ENCODE measurements at regions of chr12 and their contacts with region 1.

Region 1: GRCh38 chr12:6873094-6874014 is at the start of gene SPSB2:
- DNase-seq: peak; percentile 100
- ATAC-seq: peak; percentile 78
- H3K4me3 Mint-ChIP-seq: peak within 1 kb of the TSS; percentile 94
- H3K27ac Mint-ChIP-seq: peak within 1 kb of the TSS; percentile 93
- H3K4me1 Mint-ChIP-seq: peaks cover 48% of the 10 kb centered on the region
- H3K27me3 Mint-ChIP-seq: no peaks in the 10 kb centered on the region
- total RNA-seq, gene SPSB2: 16.4 to 17.0 TPM

Region 2: GRCh38 chr12:6716874-6717437 is 156.4 kb before region 1 on chr12:
- POLR2A ChIA-PET with region 1: no interaction called
- DNase-seq: no peak
- ATAC-seq: no peak
- H3K4me3 Mint-ChIP-seq: no peak overlapping the region
- H3K27ac Mint-ChIP-seq: no peak overlapping the region
- H3K4me1 Mint-ChIP-seq: peaks cover 2% of the 10 kb centered on the region
- H3K27me3 Mint-ChIP-seq: peaks cover 4% of the 10 kb centered on the region

Region 3: GRCh38 chr12:6735448-6736191 is 137.7 kb before region 1 on chr12:
- POLR2A ChIA-PET with region 1: no interaction called
- DNase-seq: peak; percentile 55
- ATAC-seq: peak; percentile 86
- H3K4me3 Mint-ChIP-seq: no peak overlapping the region
- H3K27ac Mint-ChIP-seq: peak overlapping the region; percentile 11
- H3K4me1 Mint-ChIP-seq: peaks cover 8% of the 10 kb centered on the region
- H3K27me3 Mint-ChIP-seq: no peaks in the 10 kb centered on the region

Region 4: GRCh38 chr12:6890789-6891645 is 17.7 kb after region 1 on chr12:
- POLR2A ChIA-PET with region 1: interaction called, 78 read pairs
- DNase-seq: peak; percentile 100
- ATAC-seq: peak; percentile 97
- H3K4me3 Mint-ChIP-seq: peak overlapping the region; percentile 88
- H3K27ac Mint-ChIP-seq: peak overlapping the region; percentile 91
- H3K4me1 Mint-ChIP-seq: peaks cover 17% of the 10 kb centered on the region
- H3K27me3 Mint-ChIP-seq: no peaks in the 10 kb centered on the region

Region 5: GRCh38 chr12:6904280-6905278 is 31.2 kb after region 1 on chr12 and contains the start of gene LRRC23:
- POLR2A ChIA-PET with region 1: interaction called, 14 read pairs
- DNase-seq: peak; percentile 93
- ATAC-seq: peak; percentile 94
- H3K4me3 Mint-ChIP-seq: no peak within 1 kb of the TSS
- H3K27ac Mint-ChIP-seq: no peak within 1 kb of the TSS
- H3K4me1 Mint-ChIP-seq: peaks cover 11% of the 10 kb centered on the region
- H3K27me3 Mint-ChIP-seq: no peaks in the 10 kb centered on the region
- total RNA-seq, gene LRRC23: 8.1 to 8.3 TPM

Region 6: DNA sequence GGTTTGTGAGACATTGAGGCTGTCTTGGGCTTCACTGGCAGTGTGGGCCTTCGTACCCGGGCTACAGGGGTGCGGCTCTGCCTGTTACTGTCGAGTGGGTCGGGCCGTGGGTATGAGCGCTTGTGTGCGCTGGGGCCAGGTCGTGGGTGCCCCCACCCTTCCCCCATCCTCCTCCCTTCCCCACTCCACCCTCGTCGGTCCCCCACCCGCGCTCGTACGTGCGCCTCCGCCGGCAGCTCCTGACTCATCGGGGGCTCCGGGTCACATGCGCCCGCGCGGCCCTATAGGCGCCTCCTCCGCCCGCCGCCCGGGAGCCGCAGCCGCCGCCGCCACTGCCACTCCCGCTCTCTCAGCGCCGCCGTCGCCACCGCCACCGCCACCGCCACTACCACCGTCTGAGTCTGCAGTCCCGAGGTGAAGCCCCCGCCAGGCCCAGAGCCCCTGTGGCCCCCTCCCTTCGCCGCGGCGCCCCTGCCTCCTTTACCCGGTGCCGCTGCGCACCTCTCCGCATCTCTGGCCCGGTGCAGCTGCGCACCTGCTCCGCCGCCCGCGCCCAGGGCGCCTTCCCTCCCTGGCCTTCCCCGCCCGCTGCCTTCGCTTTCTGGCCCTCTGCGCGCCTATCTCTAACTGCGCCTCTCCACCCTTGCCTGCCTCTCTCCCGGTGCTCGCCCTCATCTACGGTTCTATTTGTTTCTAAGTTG is 41.0 kb after region 1 on chr12 and contains the start of gene ENO2:
- POLR2A ChIA-PET with region 1: interaction called, 17 read pairs
- DNase-seq: peak; percentile 87
- ATAC-seq: peak; percentile 92
- H3K4me3 Mint-ChIP-seq: peak within 1 kb of the TSS; percentile 100
- H3K27ac Mint-ChIP-seq: peak within 1 kb of the TSS; percentile 88
- H3K4me1 Mint-ChIP-seq: peaks cover 37% of the 10 kb centered on the region
- H3K27me3 Mint-ChIP-seq: no peaks in the 10 kb centered on the region
- total RNA-seq, gene ENO2: 231 to 242 TPM

Region 7: DNA sequence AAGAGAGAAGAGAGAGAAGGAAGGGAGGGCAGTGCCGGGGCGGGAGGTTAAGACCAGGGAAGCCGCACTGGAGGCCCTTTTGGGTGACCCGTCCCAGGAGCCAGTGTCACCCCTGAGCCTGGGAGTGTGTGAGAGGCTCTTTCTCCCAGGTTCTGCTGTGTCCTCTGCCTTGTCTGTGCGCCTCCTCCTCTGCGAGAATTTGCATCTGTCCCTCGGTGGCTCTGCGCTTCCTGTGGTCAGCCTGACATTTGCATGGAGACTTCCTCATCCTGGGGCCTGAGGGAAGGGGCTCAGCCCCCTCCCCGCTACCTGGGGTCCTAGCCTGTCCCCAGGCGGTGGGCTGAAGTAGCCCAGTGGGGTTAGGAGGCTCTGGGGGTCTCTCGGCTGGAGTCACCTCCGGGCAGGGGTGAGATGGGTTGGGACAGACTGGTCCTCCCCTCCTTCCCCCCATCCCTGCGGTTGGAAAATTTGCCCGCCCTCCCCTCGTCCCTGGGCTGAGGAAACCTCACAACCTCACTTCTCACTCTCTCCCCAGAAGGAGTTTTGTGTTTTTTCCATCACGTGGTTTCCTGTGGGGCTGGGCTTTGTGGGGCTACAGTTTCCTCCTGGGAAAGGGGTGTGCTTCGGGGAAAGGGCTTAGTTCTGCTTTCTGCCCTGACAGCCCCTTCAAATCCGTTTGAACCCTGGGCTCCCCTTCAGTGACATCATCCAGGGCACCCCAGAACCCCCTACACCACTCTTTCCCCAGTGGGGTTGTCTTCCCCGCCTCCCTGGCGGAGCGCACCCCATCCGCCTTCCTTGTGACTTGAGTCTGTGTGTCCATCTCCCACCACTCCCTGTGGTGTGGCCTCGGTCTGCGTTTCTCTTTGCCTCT is 80.3 kb after region 1 on chr12:
- POLR2A ChIA-PET with region 1: interaction called, 25 read pairs
- DNase-seq: peak; percentile 78
- ATAC-seq: peak; percentile 23
- H3K4me3 Mint-ChIP-seq: peak overlapping the region; percentile 100
- H3K27ac Mint-ChIP-seq: peak overlapping the region; percentile 100
- H3K4me1 Mint-ChIP-seq: peaks cover 72% of the 10 kb centered on the region
- H3K27me3 Mint-ChIP-seq: no peaks in the 10 kb centered on the region

Region 8: DNA sequence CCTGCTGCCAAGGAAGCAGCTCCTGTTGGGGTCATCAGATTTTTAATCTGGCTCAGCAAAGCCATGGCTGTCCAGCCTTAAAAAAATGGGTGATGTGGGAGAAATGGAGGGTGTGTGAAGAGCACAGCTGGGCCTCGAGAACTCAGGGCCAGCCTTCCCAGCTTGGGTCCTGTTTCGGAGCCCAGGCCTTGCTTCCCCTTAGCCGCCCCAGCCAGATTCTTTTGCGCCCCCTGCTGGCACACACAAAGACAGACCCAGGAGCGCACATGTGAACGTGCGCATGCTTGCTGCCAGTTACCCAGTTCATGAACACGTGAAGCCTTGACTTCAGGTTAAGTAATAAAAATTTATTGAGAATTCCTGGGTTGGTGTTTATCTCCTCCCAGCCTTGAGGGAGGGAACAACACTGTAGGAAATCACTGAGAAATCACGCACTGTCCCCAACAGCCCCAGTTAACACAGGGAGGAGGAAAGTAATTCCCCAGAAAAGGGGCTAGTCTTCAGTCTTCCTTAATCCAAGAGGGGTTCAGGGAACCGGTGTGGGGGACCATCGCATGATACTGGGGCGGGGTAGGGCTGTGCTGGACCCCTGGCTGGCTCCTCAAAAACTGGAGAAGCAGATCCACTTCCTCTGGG is 91.8 kb after region 1 on chr12:
- POLR2A ChIA-PET with region 1: interaction called, 25 read pairs
- DNase-seq: peak; percentile 85
- ATAC-seq: peak; percentile 61
- H3K4me3 Mint-ChIP-seq: no peak overlapping the region
- H3K27ac Mint-ChIP-seq: peak overlapping the region; percentile 51
- H3K4me1 Mint-ChIP-seq: peaks cover 46% of the 10 kb centered on the region
- H3K27me3 Mint-ChIP-seq: no peaks in the 10 kb centered on the region